AG04449 (cell line): ENCODE measurements at regions of chr16 and their contacts with region 1.

Region 1: GRCh38 chr16:87407511-87408112 is 15.5 kb downstream of the MAP1LC3B start:
- DNase-seq: no peak
- H3K4me3 ChIP-seq: no peak overlapping the region
- CTCF ChIP-seq: no peak

Region 2: GRCh38 chr16:87391950-87392822 is 15.4 kb before region 1 on chr16 and contains the start of gene MAP1LC3B:
- CTCF ChIA-PET with region 1: interaction called, 24 read pairs
- POLR2A ChIA-PET with region 1: no interaction called
- DNase-seq: peak; percentile 59
- H3K4me3 ChIP-seq: peak within 1 kb of the TSS; percentile 81
- CTCF ChIP-seq: no peak